ENCODE measurements at regions of chr1 and their contacts with region 1.

Region 1: DNA sequence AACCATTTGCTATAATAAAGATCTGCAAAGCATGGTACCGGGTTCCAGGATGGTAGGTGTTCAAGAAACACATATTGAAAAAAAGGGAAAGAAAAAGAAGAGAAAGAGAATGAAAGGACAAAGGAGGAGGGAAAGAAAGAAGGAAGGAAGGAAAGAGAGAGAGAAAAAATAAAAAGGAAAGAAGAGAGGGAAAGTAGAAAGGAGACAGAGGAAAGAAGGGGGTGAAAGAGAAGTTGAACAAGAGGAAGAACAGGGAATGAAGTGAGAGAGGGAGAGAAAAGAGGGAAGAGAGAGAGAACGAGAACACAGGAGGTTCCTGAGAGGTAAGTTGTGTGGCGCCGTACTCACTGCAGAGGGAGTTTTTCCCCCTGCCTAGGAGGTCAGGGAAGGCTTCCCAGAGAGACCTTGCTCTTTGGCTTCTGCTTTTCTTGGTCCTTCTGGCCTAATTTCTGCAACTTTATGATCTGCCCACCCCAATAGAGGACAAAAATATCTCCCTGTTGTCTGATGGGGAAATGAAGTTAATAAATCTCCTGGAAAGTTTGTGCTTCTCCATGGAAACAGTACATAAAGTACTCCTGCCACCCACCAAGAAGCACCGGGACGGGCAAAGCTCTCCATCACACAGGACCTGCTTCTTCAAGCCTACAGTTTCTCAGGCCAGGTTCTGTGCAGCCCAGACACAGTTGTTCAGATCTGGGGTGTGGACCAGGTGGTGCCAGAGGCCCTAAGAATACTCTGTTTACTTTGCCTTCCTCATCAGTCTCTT is 124.8 kb downstream of the ROR1 start:
- DNase-seq: no peak
- H3K4me3 ChIP-seq: no peak overlapping the region
- H3K27ac ChIP-seq: no peak overlapping the region
- H3K4me1 ChIP-seq: peaks cover 9% of the 10 kb centered on the region
- H3K27me3 ChIP-seq: no peaks in the 10 kb centered on the region
- CTCF ChIP-seq: no peak
- POLR2A ChIP-seq: no peak

Region 2: DNA sequence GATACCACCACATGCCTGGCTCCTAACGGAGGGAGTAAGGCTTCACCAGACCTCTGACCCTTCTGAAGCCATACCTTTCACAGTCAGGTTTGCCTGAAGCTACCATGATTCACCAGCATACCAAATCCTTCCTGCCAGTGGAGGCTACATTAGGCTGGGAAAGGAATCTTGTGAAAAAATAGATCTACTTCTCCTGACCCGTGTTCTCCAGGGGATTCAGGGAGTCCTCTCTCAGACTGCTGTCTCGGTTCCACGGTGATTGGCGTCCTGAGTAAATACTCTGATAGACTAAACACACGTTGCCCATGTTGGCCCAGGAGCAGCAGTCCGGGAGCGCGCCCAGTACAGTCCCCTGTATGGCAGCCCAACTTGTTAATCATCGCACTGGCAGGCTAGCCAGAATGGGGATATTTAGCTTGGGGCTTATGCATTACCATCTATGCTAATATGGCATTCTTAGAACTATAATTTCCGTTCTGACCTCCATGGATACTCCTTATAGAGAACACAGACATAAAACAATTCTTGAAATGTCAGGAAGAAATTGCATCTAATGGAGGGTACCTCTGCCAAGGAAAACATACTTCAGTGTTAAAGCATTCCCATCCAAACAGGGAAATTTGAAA is 48.4 kb after region 1 on chr1:
- intact Hi-C with region 1: loop called (anchors 2 kb)
- DNase-seq: no peak
- H3K4me3 ChIP-seq: no peak overlapping the region
- H3K27ac ChIP-seq: no peak overlapping the region
- H3K4me1 ChIP-seq: peaks cover 15% of the 10 kb centered on the region
- H3K27me3 ChIP-seq: no peaks in the 10 kb centered on the region
- CTCF ChIP-seq: no peak
- POLR2A ChIP-seq: no peak